ENCODE measurements at regions of chr9 and their contacts with region 1.

Region 1: GRCh38 chr9:119810645-119811429 is 441.6 kb upstream of the BRINP1 start:
- DNase-seq: peak; percentile 63
- H3K4me3 ChIP-seq: no peak overlapping the region
- CTCF ChIP-seq: no peak

Region 2: GRCh38 chr9:119884438-119884837 is 73.6 kb after region 1 on chr9:
- in situ Hi-C with region 1: loop called (anchors 5 kb)
- DNase-seq: peak; percentile 18
- H3K4me3 ChIP-seq: no peak overlapping the region
- CTCF ChIP-seq: no peak